ENCODE measurements at regions of chr2 and their contacts with region 1.

Region 1: GRCh38 chr2:69565431-69565839 is 78.1 kb downstream of the AAK1 start:
- DNase-seq: peak; percentile 80
- ATAC-seq: peak; percentile 90
- H3K4me3 Mint-ChIP-seq: no peak overlapping the region
- H3K27ac Mint-ChIP-seq: no peak overlapping the region
- H3K4me1 Mint-ChIP-seq: peaks cover 43% of the 10 kb centered on the region
- H3K27me3 Mint-ChIP-seq: no peaks in the 10 kb centered on the region

Region 2: DNA sequence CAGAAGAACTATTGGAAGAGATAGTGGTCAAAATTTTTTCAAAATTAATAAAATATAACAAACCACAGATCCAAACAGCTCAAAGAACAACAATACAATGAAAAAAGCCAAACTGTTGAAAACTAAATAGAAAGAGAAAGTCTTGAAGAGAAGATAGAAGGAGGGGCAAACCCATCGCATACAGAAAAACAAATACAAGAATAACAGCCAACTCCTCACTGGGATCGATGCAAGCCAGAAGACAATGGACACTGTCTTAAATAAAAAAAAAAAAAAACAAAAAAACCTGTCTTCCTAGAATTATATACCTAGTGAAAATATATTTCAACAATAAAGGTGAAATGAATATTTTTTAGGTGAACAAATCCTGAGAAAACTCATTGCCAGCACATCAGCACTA is 864.9 kb before region 1 on chr2:
- CTCF ChIA-PET with region 1: no interaction called
- DNase-seq: no peak
- ATAC-seq: no peak
- H3K4me3 Mint-ChIP-seq: no peak overlapping the region
- H3K27ac Mint-ChIP-seq: no peak overlapping the region
- H3K4me1 Mint-ChIP-seq: no peaks in the 10 kb centered on the region
- H3K27me3 Mint-ChIP-seq: peaks cover 9% of the 10 kb centered on the region

Region 3: DNA sequence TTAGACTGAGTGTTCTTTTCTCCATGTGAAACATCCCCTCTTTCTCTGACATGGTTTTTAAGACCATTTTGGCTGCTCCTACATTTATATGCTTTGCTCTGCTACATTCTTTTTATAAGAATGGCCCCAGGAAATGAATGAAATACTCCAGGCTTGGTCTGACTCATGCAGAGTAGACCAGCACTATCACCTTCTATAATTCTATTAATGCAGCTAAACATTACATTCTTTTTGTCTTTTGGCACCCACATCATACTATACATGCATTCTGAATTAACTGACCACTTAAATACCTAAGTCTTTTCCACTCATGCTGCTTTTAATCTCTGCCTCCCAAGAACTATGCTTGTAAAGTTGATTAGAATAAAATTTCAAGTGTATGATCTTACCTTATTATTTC is 16.0 kb before region 1 on chr2:
- CTCF ChIA-PET with region 1: interaction called, 27 read pairs
- DNase-seq: no peak
- ATAC-seq: no peak
- H3K4me3 Mint-ChIP-seq: no peak overlapping the region
- H3K27ac Mint-ChIP-seq: no peak overlapping the region
- H3K4me1 Mint-ChIP-seq: no peaks in the 10 kb centered on the region
- H3K27me3 Mint-ChIP-seq: no peaks in the 10 kb centered on the region

Region 4: DNA sequence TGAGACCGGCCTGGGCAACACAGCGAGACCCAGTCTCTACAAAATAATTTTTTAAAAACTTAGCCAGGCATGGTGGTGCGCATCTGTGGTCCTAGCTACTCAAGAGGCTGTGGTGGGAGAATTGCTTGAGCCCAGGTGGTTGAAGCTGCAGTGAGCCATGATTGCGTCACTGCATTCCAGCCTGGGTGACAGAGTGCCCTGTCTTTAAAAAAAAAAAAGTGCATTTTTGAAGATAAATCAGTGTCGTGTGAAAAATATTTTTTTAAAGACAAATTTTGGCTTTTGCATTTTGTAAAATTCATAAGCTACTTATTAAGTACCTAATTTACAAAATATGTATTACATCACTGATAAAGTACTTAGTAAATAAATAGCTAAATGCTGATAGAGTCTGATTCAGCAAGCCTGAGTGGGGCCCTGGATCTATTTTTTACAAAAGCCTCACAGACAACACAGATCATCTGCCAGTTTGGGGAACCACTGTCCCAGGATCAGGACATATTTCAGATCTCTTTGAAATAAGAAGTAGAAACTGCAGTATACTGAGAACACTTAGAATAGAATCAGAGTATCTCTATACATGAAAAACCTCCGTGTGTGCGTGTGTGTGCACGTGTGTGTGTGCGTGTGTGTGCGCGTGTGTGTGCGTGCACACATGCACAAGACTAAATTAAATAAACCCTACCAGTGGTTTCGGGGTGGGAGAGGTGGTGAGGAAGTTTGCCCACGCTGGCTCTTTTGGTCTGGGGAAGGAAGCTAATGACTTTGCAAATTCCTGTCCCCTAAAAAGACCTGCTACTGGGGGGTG is 16.5 kb after region 1 on chr2:
- CTCF ChIA-PET with region 1: interaction called, 20 read pairs
- DNase-seq: peak; percentile 60
- ATAC-seq: peak; percentile 43
- H3K4me3 Mint-ChIP-seq: peak overlapping the region; percentile 57
- H3K27ac Mint-ChIP-seq: peak overlapping the region; percentile 78
- H3K4me1 Mint-ChIP-seq: peaks cover 74% of the 10 kb centered on the region
- H3K27me3 Mint-ChIP-seq: no peaks in the 10 kb centered on the region

Region 5: GRCh38 chr2:69643602-69644505 is 78.4 kb after region 1 on chr2 and contains the start of gene AAK1:
- CTCF ChIA-PET with region 1: interaction called, 18 read pairs
- DNase-seq: peak; percentile 93
- ATAC-seq: peak; percentile 65
- H3K4me3 Mint-ChIP-seq: peak within 1 kb of the TSS; percentile 84
- H3K27ac Mint-ChIP-seq: peak within 1 kb of the TSS; percentile 95
- H3K4me1 Mint-ChIP-seq: peaks cover 63% of the 10 kb centered on the region
- H3K27me3 Mint-ChIP-seq: no peaks in the 10 kb centered on the region
- total RNA-seq, gene AAK1: 94.0 to 99.5 TPM

Region 6: DNA sequence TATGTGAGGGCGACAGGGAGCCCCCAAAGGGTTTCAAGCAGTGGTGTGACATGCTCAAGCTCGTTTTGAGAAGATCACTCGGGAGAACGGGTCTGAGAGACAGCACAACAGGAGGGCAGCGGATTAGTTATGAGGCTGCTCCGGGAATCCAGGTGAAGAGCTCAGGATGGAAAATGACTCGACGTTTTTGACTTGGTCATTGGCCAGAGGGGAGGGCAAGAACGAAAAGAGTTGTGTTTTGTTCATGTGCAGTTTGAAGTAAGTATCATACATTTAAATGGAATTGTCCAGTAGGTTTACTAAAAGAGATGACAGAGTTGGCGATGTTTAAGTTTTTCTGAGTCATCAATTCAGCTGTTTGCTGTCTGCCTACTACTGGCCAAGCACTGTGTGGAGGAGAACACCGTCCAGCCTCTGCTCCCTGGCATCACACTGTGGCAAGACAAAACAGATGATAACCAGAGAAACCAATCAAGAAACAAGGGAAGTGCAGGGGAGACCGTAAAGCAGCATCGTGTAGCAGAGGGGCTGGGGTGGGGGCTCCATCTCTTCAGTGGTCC is 151.2 kb after region 1 on chr2:
- CTCF ChIA-PET with region 1: interaction called, 12 read pairs
- DNase-seq: no peak
- ATAC-seq: no peak
- H3K4me3 Mint-ChIP-seq: no peak overlapping the region
- H3K27ac Mint-ChIP-seq: no peak overlapping the region
- H3K4me1 Mint-ChIP-seq: peaks cover 18% of the 10 kb centered on the region
- H3K27me3 Mint-ChIP-seq: peaks cover 2% of the 10 kb centered on the region

Region 7: GRCh38 chr2:69816923-69817542 is 251.6 kb after region 1 on chr2:
- CTCF ChIA-PET with region 1: interaction called, 12 read pairs
- DNase-seq: peak; percentile 89
- ATAC-seq: peak; percentile 80
- H3K4me3 Mint-ChIP-seq: no peak overlapping the region
- H3K27ac Mint-ChIP-seq: peak overlapping the region; percentile 17
- H3K4me1 Mint-ChIP-seq: peaks cover 10% of the 10 kb centered on the region
- H3K27me3 Mint-ChIP-seq: no peaks in the 10 kb centered on the region

Region 8: GRCh38 chr2:69931832-69932595 is 366.6 kb after region 1 on chr2:
- CTCF ChIA-PET with region 1: no interaction called
- DNase-seq: no peak
- ATAC-seq: no peak
- H3K4me3 Mint-ChIP-seq: no peak overlapping the region
- H3K27ac Mint-ChIP-seq: peak overlapping the region; percentile 62
- H3K4me1 Mint-ChIP-seq: peaks cover 39% of the 10 kb centered on the region
- H3K27me3 Mint-ChIP-seq: no peaks in the 10 kb centered on the region